ENCODE measurements at regions of chr11 and their contacts with region 1.

Region 1: DNA sequence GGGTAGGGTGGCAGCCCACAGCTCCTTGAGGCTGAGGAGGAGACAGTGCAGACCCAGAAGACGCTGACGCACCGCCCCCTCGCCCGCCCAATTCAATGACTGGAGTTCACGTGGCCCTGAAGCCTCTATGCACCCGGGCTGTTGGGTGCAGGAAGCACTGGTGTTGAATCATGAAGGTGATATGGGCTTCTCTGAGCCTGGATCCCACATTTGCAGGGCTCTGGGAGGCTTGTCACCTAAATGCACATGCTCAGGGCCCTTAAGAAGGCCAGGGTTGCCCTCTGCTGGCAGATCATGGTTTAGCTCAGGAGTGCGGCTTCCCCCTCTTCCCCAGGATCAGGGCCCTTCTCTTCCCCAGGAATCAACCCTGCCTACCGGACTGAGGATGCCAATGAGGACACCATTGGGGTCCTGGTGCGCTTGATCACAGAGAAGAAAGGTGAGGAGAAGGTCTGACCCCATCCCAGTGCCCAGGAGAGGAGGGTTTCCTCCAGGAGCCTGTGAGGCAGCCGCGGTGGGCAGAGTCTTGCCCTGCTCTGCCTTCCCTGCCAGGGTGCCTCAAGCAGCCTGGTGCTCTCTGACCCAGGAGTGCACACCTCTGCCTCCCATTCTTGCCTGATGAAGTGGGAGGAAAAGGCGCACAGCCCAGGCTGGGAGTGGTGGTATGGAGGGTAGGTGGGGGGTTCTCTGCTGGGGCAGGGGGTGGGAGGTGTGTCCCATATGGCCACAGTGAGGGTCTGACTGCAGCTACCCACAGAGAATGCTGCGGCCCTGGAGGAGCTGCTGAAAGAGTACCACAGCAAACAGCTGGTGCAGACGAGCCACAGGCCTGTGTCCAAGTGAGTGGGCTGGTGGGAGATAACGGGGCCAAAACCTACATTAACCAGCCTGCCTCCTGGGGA is 17.5 kb downstream of the RELT start:
- DNase-seq: peak; percentile 80
- H3K4me3 ChIP-seq: no peak overlapping the region
- H3K27ac ChIP-seq: no peak overlapping the region
- H3K4me1 ChIP-seq: no peaks in the 10 kb centered on the region
- H3K27me3 ChIP-seq: no peaks in the 10 kb centered on the region
- CTCF ChIP-seq: peak; percentile 66 to 90 (median 79)
- EP300 ChIP-seq: no peak
- POLR2A ChIP-seq: no peak

Region 2: GRCh38 chr11:73342633-73343032 is 51.1 kb before region 1 on chr11:
- in situ Hi-C with region 1: loop called in 1 of 4 experiments (anchors 10 kb)
- intact Hi-C with region 1: no loop called
- DNase-seq: no peak
- H3K4me3 ChIP-seq: peak overlapping the region in 3 of 4 donors; percentile 18 to 36 (median 33)
- H3K27ac ChIP-seq: peak overlapping the region in 1 of 4 donors; percentile 30
- H3K4me1 ChIP-seq: peaks cover 5 to 26% (median 24%) of the 10 kb centered on the region in 4 donors
- H3K27me3 ChIP-seq: no peaks in the 10 kb centered on the region
- CTCF ChIP-seq: no peak
- EP300 ChIP-seq: no peak
- POLR2A ChIP-seq: no peak

Region 3: GRCh38 chr11:73350908-73351636 is 42.7 kb before region 1 on chr11:
- in situ Hi-C with region 1: loop called in 3 of 4 experiments (anchors 5 to 10 kb)
- intact Hi-C with region 1: no loop called
- DNase-seq: peak; percentile 59
- H3K4me3 ChIP-seq: no peak overlapping the region
- H3K27ac ChIP-seq: peak overlapping the region in 1 of 4 donors; percentile 22
- H3K4me1 ChIP-seq: peaks cover 0 to 7% (median 3%) of the 10 kb centered on the region in 4 donors
- H3K27me3 ChIP-seq: no peaks in the 10 kb centered on the region
- CTCF ChIP-seq: peak; percentile 90 to 99 (median 97)
- EP300 ChIP-seq: no peak
- POLR2A ChIP-seq: no peak